Cardiac septum (tissue), 1 donor: ENCODE measurements at regions of chr15 and their contacts with region 1.

Region 1: GRCh38 chr15:84915011-84915958 is 30.8 kb downstream of the SLC28A1 start:
- DNase-seq: peak; percentile 94

Region 2: DNA sequence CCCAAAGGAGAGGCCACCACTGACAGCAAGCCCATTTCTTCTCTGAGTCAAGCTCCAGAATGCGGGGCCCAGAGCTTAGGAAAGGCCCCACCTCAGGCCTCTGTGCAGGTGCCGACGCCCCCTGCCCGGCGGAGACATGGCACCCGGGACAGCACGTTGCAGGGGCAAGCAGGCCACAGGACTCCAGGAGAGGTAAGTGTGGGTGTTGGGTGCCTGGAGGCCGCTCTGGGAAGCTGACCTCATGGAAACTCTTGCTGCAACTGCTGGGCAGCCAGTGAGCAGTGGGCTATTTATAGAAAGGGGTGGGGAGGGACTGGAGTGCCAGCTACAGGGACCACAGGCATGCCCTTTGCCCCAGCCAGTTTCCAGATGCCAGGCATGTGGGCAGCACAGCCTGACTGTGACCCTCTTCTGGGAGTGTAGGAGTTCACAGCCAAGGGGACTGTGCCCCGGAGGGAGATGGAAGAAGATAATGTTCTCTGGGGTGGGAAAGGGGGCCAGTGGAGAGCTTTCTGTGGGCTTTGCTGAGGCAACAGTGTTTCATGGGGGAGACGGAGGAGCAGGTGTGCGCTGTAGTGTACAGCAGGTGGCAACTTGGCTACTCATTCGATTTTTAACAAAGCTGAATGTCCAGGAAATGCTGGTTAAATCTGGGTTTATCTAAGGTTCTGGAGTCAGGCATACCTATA is 74.4 kb before region 1 on chr15:
- intact Hi-C with region 1: loop called (anchors 2 kb)
- DNase-seq: peak; percentile 90